Endothelial cell of umbilical vein (primary cell): ENCODE measurements at regions of chr11 and their contacts with region 1.

Region 1: GRCh38 chr11:31958076-31958735 is 132.7 kb upstream of the RCN1 start:
- DNase-seq: peak; percentile 44
- H3K4me3 ChIP-seq: no peak overlapping the region
- H3K27ac ChIP-seq: no peak overlapping the region
- H3K4me1 ChIP-seq: no peaks in the 10 kb centered on the region
- H3K27me3 ChIP-seq: no peaks in the 10 kb centered on the region
- CTCF ChIP-seq: peak; percentile 83 to 90
- POLR2A ChIP-seq: no peak

Region 2: GRCh38 chr11:31240338-31240904 is 717.8 kb before region 1 on chr11:
- CTCF ChIA-PET with region 1: interaction called, 81 read pairs
- POLR2A ChIA-PET with region 1: no interaction called
- dilution Hi-C with region 1: no loop called
- intact Hi-C with region 1: loop called (anchors 1 kb)
- DNase-seq: peak; percentile 51
- H3K4me3 ChIP-seq: no peak overlapping the region
- H3K27ac ChIP-seq: no peak overlapping the region
- H3K4me1 ChIP-seq: no peaks in the 10 kb centered on the region
- H3K27me3 ChIP-seq: no peaks in the 10 kb centered on the region
- CTCF ChIP-seq: peak; percentile 38 to 51
- POLR2A ChIP-seq: no peak

Region 3: DNA sequence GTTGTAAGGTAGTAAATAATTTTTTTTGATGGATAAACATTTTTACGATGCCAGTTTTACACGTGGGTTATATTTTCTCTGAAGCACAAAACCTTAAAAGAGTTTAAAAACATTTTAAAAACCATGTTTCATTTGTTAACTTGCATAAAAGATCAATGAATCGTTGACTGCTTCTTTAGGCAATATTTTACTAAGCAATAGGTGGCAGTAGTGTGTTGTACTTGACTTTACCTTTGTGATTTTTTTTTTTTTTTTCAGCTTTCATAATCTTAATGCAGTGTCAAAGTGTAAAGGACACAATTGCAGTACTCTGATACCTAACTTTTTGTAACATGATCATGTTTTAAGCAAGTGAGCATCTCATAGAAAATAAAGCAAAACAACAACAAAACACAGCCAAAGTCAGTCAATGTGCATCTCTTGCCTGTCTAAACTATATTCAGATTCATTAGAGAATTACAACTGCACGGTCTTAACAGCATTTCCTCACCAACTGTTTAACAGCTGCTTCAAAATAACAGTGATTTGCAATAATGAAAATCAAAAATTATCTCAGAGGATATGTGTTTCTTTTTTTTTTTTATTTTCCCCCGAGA is 560.9 kb before region 1 on chr11:
- CTCF ChIA-PET with region 1: interaction called, 61 read pairs
- POLR2A ChIA-PET with region 1: no interaction called
- dilution Hi-C with region 1: no loop called
- intact Hi-C with region 1: loop called (anchors 1 kb)
- DNase-seq: peak; percentile 39
- H3K4me3 ChIP-seq: no peak overlapping the region
- H3K27ac ChIP-seq: no peak overlapping the region
- H3K4me1 ChIP-seq: no peaks in the 10 kb centered on the region
- H3K27me3 ChIP-seq: no peaks in the 10 kb centered on the region
- CTCF ChIP-seq: peak; percentile 37 to 39
- POLR2A ChIP-seq: no peak

Region 4: GRCh38 chr11:31798554-31799434 is 159.4 kb before region 1 on chr11:
- CTCF ChIA-PET with region 1: no interaction called
- POLR2A ChIA-PET with region 1: no interaction called
- dilution Hi-C with region 1: no loop called
- intact Hi-C with region 1: no loop called
- DNase-seq: no peak
- H3K4me3 ChIP-seq: no peak overlapping the region
- H3K27ac ChIP-seq: no peak overlapping the region
- H3K4me1 ChIP-seq: peaks cover 5% of the 10 kb centered on the region
- H3K27me3 ChIP-seq: peaks cover 88 to 95% of the 10 kb centered on the region in 2 experiments
- CTCF ChIP-seq: peak in 1 of 2 donors; percentile 26
- POLR2A ChIP-seq: no peak

Region 5: DNA sequence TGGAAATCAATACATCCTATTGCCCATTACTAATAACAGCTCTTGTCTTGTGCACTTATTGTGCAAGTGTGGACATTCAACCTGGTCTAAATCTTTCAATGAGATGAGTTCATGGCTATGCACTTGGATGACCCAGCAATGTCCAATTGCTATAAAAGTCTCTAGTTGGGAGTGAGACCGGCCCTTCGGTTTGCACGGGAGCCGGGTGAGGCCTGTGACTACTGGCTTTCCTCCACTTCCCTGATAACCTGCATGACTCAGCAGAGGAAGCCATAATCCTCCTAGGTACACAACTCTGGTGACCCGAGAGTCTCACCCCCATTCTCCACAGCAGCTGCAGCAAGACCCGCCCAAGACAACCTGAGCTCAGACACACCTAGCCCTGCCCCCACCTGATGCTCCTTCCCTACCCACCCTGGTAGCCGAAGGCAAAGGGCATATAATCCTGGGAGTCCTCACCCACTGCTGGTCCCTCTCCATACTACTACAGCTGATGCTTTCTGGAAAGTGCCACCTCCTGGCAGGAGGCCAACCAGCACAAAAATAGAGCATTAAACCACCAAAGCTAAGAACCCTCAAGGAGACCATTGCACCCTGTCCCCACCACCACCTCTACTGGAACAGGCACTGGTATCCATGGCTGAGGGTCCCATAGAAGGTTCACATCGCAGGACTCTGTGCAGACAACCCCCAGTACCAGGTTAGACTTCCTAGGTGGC is 11.0 kb before region 1 on chr11:
- CTCF ChIA-PET with region 1: interaction called, 11 read pairs
- POLR2A ChIA-PET with region 1: no interaction called
- dilution Hi-C with region 1: no loop called
- intact Hi-C with region 1: no loop called
- DNase-seq: no peak
- H3K4me3 ChIP-seq: no peak overlapping the region
- H3K27ac ChIP-seq: no peak overlapping the region
- H3K4me1 ChIP-seq: no peaks in the 10 kb centered on the region
- H3K27me3 ChIP-seq: peaks cover 0 to 2% of the 10 kb centered on the region in 2 experiments
- CTCF ChIP-seq: no peak
- POLR2A ChIP-seq: no peak